Transverse colon (tissue), 4 donors: ENCODE measurements at regions of chr13 and their contacts with region 1.

Region 1: GRCh38 chr13:30679483-30680330 is 55.6 kb upstream of the ALOX5AP start:
- DNase-seq: no peak
- H3K4me3 ChIP-seq: no peak overlapping the region
- H3K27ac ChIP-seq: no peak overlapping the region
- H3K4me1 ChIP-seq: peaks cover 0 to 9% (median 3%) of the 10 kb centered on the region in 4 donors
- H3K27me3 ChIP-seq: no peaks in the 10 kb centered on the region
- CTCF ChIP-seq: peak; percentile 32 to 44 (median 40)
- EP300 ChIP-seq: no peak
- POLR2A ChIP-seq: no peak

Region 2: DNA sequence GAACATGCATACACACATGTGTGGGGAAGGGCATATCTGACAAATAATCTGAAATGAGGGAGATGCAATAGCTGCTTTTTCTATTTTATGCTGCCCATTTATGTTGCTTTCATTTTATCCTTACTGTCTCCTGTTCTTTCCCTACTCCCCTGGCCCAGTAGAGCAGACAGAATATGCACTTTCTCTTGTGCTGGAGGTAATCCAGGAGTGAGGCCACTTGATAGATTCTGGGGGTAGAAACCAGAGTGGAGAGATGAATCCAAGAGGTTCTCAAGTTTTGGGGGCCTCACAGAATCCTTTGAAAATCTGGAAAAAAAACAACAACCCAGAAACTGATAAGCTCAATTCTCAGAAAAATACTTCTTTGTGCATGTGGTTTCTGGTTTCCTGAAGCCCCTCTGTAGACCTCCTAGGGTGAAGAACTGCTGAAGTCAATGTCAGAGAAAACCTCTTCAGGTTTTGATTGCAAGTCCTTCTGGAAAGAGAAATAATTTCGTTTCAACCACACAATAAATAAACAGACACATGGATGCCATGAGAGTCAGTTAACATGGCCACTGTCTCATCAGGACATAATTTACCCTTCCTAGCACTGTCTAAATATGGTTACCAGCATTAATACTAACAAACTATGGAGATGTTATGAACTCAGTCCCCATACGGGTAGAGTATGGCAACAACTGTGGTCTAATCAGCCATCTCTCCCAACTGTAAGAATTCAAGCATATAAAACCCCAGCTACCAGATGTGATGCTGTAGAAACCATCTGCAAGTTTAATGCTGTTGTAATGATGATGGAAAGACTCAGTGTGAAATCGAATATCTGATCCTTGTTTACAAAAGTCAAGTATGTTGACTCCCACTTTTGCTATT is 1439.8 kb before region 1 on chr13:
- in situ Hi-C with region 1: no loop called
- intact Hi-C with region 1: no loop called
- DNase-seq: no peak
- H3K4me3 ChIP-seq: no peak overlapping the region
- H3K27ac ChIP-seq: no peak overlapping the region
- H3K4me1 ChIP-seq: no peaks in the 10 kb centered on the region
- H3K27me3 ChIP-seq: no peaks in the 10 kb centered on the region
- CTCF ChIP-seq: no peak
- EP300 ChIP-seq: no peak
- POLR2A ChIP-seq: no peak

Region 3: GRCh38 chr13:30617315-30618185 is 62.2 kb before region 1 on chr13 and contains the start of gene USPL1:
- in situ Hi-C with region 1: no loop called
- intact Hi-C with region 1: loop called (anchors 10 kb)
- DNase-seq: peak; percentile 99
- H3K4me3 ChIP-seq: peak within 1 kb of the TSS; percentile 82 to 93 (median 92)
- H3K27ac ChIP-seq: peak within 1 kb of the TSS; percentile 98 to 100 (median 100)
- H3K4me1 ChIP-seq: peaks cover 21 to 36% (median 29%) of the 10 kb centered on the region in 4 donors
- H3K27me3 ChIP-seq: no peaks in the 10 kb centered on the region
- CTCF ChIP-seq: peak in 4 of 5 experiments; percentile 29 to 93 (median 58)
- EP300 ChIP-seq: peak; percentile 56
- POLR2A ChIP-seq: peak; percentile 99
- total RNA-seq, gene USPL1: 8.6 to 27.3 (median 16.9) TPM

Region 4: GRCh38 chr13:30792285-30793000 is 112.7 kb after region 1 on chr13:
- in situ Hi-C with region 1: loop called (anchors 5 to 10 kb)
- intact Hi-C with region 1: loop called (anchors 10 kb)
- DNase-seq: peak; percentile 50
- H3K4me3 ChIP-seq: no peak overlapping the region
- H3K27ac ChIP-seq: peak overlapping the region; percentile 17 to 54 (median 43)
- H3K4me1 ChIP-seq: peaks cover 0 to 27% (median 8%) of the 10 kb centered on the region in 4 donors
- H3K27me3 ChIP-seq: no peaks in the 10 kb centered on the region
- CTCF ChIP-seq: peak in 2 of 5 experiments; percentile 9 to 13
- EP300 ChIP-seq: no peak
- POLR2A ChIP-seq: no peak

Region 5: GRCh38 chr13:30851697-30852096 is 172.0 kb after region 1 on chr13:
- in situ Hi-C with region 1: no loop called
- intact Hi-C with region 1: no loop called
- DNase-seq: no peak
- H3K4me3 ChIP-seq: no peak overlapping the region
- H3K27ac ChIP-seq: no peak overlapping the region
- H3K4me1 ChIP-seq: no peaks in the 10 kb centered on the region
- H3K27me3 ChIP-seq: no peaks in the 10 kb centered on the region
- CTCF ChIP-seq: no peak
- EP300 ChIP-seq: no peak
- POLR2A ChIP-seq: no peak